ENCODE measurements at regions of chr10 and their contacts with region 1.

Region 1: GRCh38 chr10:6920072-6921019 is 340.3 kb upstream of the PRKCQ start:
- DNase-seq: peak; percentile 75
- H3K4me3 Mint-ChIP-seq: peak overlapping the region; percentile 21
- H3K27ac Mint-ChIP-seq: no peak overlapping the region
- H3K4me1 Mint-ChIP-seq: peaks cover 16% of the 10 kb centered on the region
- H3K27me3 Mint-ChIP-seq: peaks cover 9% of the 10 kb centered on the region
- CTCF ChIP-seq: peak; percentile 66

Region 2: GRCh38 chr10:6642876-6643275 is 277.5 kb before region 1 on chr10:
- CTCF ChIA-PET with region 1: no interaction called
- intact Hi-C with region 1: no loop called
- DNase-seq: no peak
- H3K4me3 Mint-ChIP-seq: no peak overlapping the region
- H3K27ac Mint-ChIP-seq: no peak overlapping the region
- H3K4me1 Mint-ChIP-seq: no peaks in the 10 kb centered on the region
- H3K27me3 Mint-ChIP-seq: peaks cover 71% of the 10 kb centered on the region
- CTCF ChIP-seq: no peak

Region 3: GRCh38 chr10:6972226-6972625 is 51.9 kb after region 1 on chr10:
- CTCF ChIA-PET with region 1: no interaction called
- intact Hi-C with region 1: loop called (anchors 1 kb)
- DNase-seq: no peak
- H3K4me3 Mint-ChIP-seq: no peak overlapping the region
- H3K27ac Mint-ChIP-seq: no peak overlapping the region
- H3K4me1 Mint-ChIP-seq: no peaks in the 10 kb centered on the region
- H3K27me3 Mint-ChIP-seq: peaks cover 100% of the 10 kb centered on the region
- CTCF ChIP-seq: no peak

Region 4: DNA sequence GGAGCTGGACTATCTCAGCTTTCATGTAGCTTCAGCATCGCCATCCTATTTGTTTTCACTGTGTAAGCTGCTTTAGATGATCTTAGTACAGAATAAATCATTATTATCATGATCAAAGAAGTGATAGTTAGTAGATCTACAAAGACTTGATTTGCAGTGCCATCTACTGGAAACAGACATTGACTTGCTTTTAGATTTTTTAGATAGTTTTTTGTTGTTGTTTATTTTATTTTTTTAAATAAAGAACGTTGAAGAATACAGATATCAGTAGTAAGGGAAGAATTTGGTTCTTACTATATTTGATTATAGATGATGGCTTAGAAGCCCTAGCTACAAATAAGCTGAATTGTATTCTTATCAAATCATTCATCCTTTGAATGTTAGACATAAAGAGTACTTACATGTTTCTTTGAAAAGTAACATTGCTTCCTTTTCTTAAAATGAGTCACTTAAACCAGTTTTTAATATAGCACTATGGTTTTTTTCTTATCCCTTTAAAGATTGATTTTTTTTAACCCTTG is 496.8 kb after region 1 on chr10:
- CTCF ChIA-PET with region 1: no interaction called
- intact Hi-C with region 1: loop called (anchors 5 kb)
- DNase-seq: no peak
- H3K4me3 Mint-ChIP-seq: no peak overlapping the region
- H3K27ac Mint-ChIP-seq: no peak overlapping the region
- H3K4me1 Mint-ChIP-seq: no peaks in the 10 kb centered on the region
- H3K27me3 Mint-ChIP-seq: peaks cover 59% of the 10 kb centered on the region
- CTCF ChIP-seq: no peak

Measured in Calu3 (cell line).